WTC11 (cell line): ENCODE measurements at regions of chr20 and their contacts with region 1.

Region 1: GRCh38 chr20:44271915-44272663 is 25.0 kb downstream of the GDAP1L1 start:
- DNase-seq: peak; percentile 71
- ATAC-seq: peak; percentile 95
- H3K4me3 Mint-ChIP-seq: no peak overlapping the region
- H3K27ac Mint-ChIP-seq: no peak overlapping the region
- H3K4me1 Mint-ChIP-seq: no peaks in the 10 kb centered on the region
- H3K27me3 Mint-ChIP-seq: no peaks in the 10 kb centered on the region
- CTCF ChIP-seq: peak; percentile 34; the same call in 1 of the 2 replicates

Region 2: GRCh38 chr20:44109951-44110361 is 162.1 kb before region 1 on chr20:
- CTCF ChIA-PET with region 1: no interaction called
- POLR2A ChIA-PET with region 1: interaction called, 14 read pairs
- DNase-seq: peak; percentile 59
- ATAC-seq: peak; percentile 92
- H3K4me3 Mint-ChIP-seq: no peak overlapping the region
- H3K27ac Mint-ChIP-seq: no peak overlapping the region
- H3K4me1 Mint-ChIP-seq: 0 out of 2 replicates have a peak, but pooled peaks cover 2% of the 10 kb centered on the region
- H3K27me3 Mint-ChIP-seq: peaks cover 11% of the 10 kb centered on the region
- CTCF ChIP-seq: peak; percentile 40

Region 3: DNA sequence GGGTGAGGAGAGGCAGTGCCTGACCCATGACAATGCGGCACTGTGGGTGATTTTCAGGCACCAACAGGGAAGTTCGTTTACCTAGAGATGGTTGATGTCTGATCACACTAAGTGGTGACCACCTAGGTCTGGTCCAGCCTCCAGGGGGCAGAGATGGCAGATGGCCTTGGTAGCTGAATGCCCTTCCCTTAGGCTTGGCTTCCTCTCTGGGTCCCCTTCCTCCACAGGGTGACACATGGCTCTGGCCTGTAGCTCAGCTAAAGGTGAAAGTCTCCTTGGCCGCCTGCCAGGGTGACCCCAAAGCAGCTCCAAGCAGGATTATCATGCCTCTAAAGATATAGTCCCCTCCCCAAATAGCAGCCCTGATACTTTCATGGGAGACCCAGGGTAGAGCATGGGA is 18.6 kb before region 1 on chr20:
- CTCF ChIA-PET with region 1: interaction called, 25 read pairs
- POLR2A ChIA-PET with region 1: no interaction called
- DNase-seq: peak; percentile 22
- ATAC-seq: peak; percentile 82
- H3K4me3 Mint-ChIP-seq: no peak overlapping the region
- H3K27ac Mint-ChIP-seq: no peak overlapping the region
- H3K4me1 Mint-ChIP-seq: peaks cover 6% of the 10 kb centered on the region
- H3K27me3 Mint-ChIP-seq: no peaks in the 10 kb centered on the region
- CTCF ChIP-seq: no peak